ENCODE measurements at regions of chr16 and their contacts with region 1.

Region 1: DNA sequence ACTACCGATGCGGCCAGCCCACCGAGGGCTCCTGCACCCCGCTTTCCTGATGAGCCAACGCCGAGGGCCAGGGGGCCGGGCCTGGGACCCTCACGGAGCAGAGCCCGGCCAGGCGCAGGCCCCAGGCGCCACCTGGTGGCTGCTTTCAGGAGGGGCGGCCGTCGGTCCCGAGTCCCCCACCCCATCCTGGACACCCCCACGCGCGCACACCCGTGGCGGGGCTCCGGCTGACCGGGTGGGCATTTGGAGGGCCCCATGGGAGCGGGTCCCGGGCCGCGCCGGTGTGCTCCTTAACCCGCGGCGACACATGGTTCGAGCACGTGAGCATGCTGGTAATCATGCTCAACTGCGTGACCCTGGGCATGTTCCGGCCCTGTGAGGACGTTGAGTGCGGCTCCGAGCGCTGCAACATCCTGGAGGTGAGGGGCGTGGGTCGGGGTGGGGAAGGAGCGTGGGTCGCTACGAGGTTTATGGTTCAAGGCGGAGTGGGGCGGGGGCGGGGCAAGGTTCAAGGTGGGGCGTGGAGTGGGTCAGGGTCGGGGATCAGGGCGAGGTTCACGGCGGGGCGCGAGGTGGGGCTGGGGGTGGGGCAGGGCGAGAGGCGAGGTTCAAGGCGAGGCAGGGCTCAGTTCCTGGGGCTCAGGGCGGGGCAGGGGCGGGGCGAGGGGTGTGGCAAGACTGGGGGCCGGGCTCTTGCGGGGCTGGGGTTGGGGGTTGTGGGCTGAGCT is 30.2 kb downstream of the TPSG1 start:
- DNase-seq: no peak
- H3K4me3 ChIP-seq: no peak overlapping the region
- H3K27ac ChIP-seq: peak overlapping the region; percentile 79 to 90 (median 85)
- H3K4me1 ChIP-seq: peaks cover 0 to 51% (median 48%) of the 10 kb centered on the region in 4 donors
- H3K27me3 ChIP-seq: no peaks in the 10 kb centered on the region
- CTCF ChIP-seq: peak; percentile 75 to 92 (median 82)
- EP300 ChIP-seq: no peak
- POLR2A ChIP-seq: no peak

Region 2: GRCh38 chr16:1105888-1106620 is 88.8 kb before region 1 on chr16:
- intact Hi-C with region 1: loop called (anchors 1 kb)
- DNase-seq: peak; percentile 86
- H3K4me3 ChIP-seq: no peak overlapping the region
- H3K27ac ChIP-seq: no peak overlapping the region
- H3K4me1 ChIP-seq: peaks cover 0 to 23% (median 19%) of the 10 kb centered on the region in 4 donors
- H3K27me3 ChIP-seq: peaks cover 13 to 51% (median 26%) of the 10 kb centered on the region in 3 donors
- CTCF ChIP-seq: peak; percentile 58 to 92 (median 76)
- EP300 ChIP-seq: no peak
- POLR2A ChIP-seq: no peak

Measured in sigmoid colon (tissue), 7 donors.